Heart left ventricle (tissue), 16 donors: ENCODE measurements at regions of chr5 and their contacts with region 1.

Region 1: GRCh38 chr5:149114403-149115312 is 26.6 kb upstream of the ABLIM3 start:
- DNase-seq: peak; percentile 49 to 73 (median 55)
- ATAC-seq: peak; percentile 85 to 97 (median 95)
- H3K4me3 ChIP-seq: no peak overlapping the region
- H3K27ac ChIP-seq: peak overlapping the region in 7 of 12 donors; percentile 2 to 62 (median 38)
- H3K4me1 ChIP-seq: peaks cover 0 to 10% (median 4%) of the 10 kb centered on the region in 12 donors
- H3K27me3 ChIP-seq: no peaks in the 10 kb centered on the region
- CTCF ChIP-seq: peak; percentile 49 to 85 (median 75)
- POLR2A ChIP-seq: no peak

Region 2: DNA sequence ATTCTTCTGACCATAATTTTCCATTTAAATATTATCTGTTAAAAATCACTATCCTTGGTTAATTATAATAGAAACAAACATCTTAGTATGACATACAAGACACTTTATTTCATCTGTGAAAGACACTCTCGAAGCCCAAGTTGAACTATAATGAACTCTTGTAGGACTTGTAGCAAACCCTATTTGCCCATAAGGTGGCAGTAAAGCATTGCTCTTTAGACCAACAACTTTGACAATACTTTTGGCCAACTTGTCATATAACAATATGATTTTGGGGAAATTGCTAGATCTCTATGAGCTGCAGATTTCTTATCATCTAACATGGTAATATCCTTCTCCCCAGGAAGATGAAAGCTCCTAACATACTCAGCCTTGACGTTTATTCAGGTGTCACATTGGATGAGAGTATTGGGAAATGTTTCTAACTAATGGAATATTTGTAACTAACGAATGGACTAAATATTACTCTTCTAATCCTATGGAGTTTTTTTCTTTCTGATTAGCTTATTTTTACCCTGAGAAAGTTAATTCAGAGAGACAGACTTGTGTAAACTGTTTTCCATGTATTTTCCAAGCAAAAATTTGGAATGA is 935.3 kb before region 1 on chr5:
- intact Hi-C with region 1: loop called in 1 of 10 experiments (anchors 10 kb)
- DNase-seq: peak in 1 of 5 donors; percentile 6
- ATAC-seq: peak in 3 of 4 donors; percentile 49 to 75 (median 70)
- H3K4me3 ChIP-seq: no peak overlapping the region
- H3K27ac ChIP-seq: no peak overlapping the region
- H3K4me1 ChIP-seq: peaks cover 0 to 5% (median 0%) of the 10 kb centered on the region in 12 donors
- H3K27me3 ChIP-seq: no peaks in the 10 kb centered on the region
- CTCF ChIP-seq: peak; percentile 51 to 88 (median 74)
- POLR2A ChIP-seq: no peak

Region 3: DNA sequence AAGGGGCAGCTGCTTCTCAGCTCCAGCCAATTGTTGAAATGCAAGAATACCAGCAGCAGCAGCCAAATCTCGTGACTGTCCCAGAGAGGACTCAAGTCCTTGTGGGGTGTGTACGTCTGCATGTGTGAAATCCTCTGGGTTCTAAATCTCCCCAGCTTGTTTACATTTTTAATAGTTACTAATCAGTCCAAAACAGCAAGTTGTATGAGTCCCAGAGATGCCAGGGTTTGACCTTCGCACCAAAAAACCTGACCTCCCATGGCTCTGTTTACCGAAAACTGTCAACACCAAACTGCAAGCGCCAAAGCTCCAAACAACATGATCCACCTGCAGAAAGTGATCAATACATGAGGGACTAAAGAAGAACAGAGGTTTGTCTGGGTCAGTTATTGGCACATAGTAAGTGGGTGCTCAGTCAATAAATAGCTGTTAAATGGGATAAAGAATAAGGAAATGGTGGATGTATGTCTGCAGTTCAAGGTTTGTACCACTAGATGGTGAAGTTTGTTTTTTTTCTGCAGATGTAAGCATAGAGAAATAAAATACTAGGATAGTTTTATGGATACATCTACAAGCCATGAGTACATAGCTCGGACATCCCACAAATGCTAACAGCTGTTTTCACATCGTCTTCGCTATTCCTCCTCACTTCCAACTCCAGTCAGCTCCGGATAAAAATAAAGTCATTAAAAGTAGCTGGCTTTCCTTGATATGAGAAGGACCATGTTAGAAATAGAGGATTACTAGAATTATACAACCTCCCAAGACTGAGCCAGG is 373.5 kb before region 1 on chr5:
- intact Hi-C with region 1: loop called in 4 of 10 experiments (anchors 2 to 5 kb)
- DNase-seq: peak in 1 of 5 donors; percentile 43
- ATAC-seq: peak; percentile 55 to 78 (median 74)
- H3K4me3 ChIP-seq: no peak overlapping the region
- H3K27ac ChIP-seq: peak overlapping the region in 1 of 12 donors; percentile 12
- H3K4me1 ChIP-seq: peaks cover 0 to 33% (median 13%) of the 10 kb centered on the region in 12 donors
- H3K27me3 ChIP-seq: no peaks in the 10 kb centered on the region
- CTCF ChIP-seq: peak; percentile 63 to 81 (median 75)
- POLR2A ChIP-seq: no peak

Region 4: DNA sequence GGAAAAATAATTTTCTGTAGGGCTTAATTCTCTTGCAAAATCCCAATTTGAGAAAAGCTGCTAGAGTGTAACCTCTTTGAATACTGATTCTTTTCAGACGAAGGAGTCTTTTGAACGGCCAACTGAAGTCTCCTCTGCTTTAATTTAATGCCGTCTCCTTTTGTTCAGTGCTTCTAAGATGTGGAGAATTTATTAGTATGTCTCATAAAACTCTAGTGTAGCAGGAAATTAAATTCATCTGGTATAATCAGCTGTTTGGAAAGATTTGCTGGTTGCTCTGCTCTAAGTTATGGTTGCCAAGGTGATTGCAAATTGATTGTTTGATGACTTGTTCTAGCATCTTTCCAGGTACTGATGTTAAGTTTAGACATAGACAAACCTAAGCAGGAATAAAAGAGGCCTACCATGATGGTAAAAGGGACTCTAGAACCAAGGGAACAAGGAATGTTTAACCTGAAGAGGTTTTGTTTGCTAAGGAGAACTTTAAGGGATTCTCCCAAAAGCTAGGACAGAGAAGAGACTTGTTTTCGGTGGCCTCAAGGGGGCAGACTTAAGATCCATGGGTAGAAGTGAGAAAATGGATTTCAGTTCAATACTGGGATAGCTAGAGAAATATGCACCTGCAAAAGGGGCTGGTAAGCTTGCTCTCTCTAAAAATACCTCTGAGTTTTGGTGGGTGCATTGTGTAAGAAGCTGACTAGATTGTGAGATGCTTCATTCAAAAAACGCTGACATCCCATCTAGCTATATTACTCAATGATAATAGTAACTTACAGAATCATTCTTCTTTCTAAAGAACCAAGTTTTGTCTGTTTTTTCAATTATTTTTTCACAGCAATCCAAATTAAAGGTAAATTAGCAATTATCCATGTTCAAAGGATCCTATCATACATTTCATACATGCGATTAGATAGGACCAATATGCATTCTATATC is 293.9 kb before region 1 on chr5:
- intact Hi-C with region 1: loop called in 4 of 10 experiments (anchors 5 to 10 kb)
- DNase-seq: no peak
- ATAC-seq: no peak
- H3K4me3 ChIP-seq: no peak overlapping the region
- H3K27ac ChIP-seq: no peak overlapping the region
- H3K4me1 ChIP-seq: peaks cover 0 to 47% (median 6%) of the 10 kb centered on the region in 12 donors
- H3K27me3 ChIP-seq: no peaks in the 10 kb centered on the region
- CTCF ChIP-seq: peak; percentile 38 to 70 (median 58)
- POLR2A ChIP-seq: no peak

Region 5: DNA sequence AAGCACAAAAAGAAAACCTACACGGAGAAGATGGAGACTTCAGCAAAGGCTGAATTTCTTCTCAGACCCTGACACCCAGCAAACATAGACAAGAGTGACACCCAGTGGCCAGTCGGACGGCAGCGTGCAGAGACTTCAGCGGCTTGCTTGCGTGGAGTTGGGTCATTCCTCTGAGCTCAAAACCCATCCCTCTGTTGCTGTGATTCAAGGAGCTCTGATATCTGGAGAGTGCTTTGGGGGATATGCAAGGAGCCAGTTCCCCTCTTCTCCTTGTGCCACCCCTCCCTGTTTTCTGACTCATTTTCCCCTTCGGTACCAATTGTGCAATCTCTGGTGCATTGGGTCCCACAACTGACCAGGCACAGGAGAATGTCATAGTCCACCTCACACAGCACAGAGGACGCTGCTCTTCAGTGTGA is 79.3 kb before region 1 on chr5:
- intact Hi-C with region 1: loop called in 9 of 10 experiments (anchors 2 to 10 kb)
- DNase-seq: peak; percentile 71 to 88 (median 77)
- ATAC-seq: peak; percentile 82 to 94 (median 91)
- H3K4me3 ChIP-seq: no peak overlapping the region
- H3K27ac ChIP-seq: no peak overlapping the region
- H3K4me1 ChIP-seq: peaks cover 0 to 39% (median 8%) of the 10 kb centered on the region in 12 donors
- H3K27me3 ChIP-seq: no peaks in the 10 kb centered on the region
- CTCF ChIP-seq: peak; percentile 69 to 91 (median 86)
- POLR2A ChIP-seq: no peak